ENCODE measurements at regions of chr3 and their contacts with region 1.

Region 1: DNA sequence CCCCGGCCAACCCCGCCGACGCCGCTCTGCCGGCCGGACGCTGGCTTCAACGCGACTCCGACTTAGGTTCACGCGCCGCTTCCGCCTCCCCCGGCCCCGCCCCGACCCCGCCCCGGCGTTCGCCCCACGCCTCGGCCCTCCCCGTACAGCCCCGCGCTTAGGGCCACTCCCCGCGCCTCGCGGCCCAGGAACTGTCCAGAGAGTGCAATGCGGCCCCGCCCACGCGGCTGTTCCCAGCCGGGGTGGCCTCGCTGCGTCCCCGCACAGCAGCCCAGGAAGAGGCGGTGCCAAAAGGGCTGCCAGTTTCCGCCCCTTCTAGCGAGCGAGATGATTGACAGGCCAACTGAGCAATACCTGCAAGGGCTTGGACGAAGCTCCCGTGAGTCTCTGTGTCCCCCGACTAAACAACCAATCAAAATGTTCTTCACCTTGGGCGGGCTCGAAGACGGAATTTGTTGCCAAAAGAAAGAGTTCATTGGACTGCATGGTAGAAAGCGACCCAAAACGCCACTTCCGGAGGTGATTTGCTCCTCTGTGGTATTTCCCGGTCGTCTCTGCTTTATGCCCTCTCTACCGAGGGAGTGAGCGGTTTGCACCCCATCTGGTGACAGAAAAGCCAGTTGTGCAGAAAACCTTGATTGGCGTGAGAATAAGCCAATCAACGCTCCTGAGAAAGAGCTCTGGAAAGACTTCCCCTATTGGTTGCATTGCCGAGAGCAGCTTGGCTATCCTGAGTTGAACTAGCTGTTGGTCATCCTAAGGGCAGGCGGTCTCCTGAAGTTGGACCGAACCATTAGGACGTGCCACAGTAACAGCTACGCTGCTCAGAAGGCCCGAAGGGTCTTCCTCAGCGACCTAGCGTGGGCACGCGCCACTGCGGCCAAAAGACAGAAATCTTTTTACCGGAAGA is at the start of gene UBP1:
- DNase-seq: peak; percentile 99
- H3K4me3 Mint-ChIP-seq: peak within 1 kb of the TSS; percentile 100
- H3K27ac Mint-ChIP-seq: peak within 1 kb of the TSS; percentile 100
- H3K4me1 Mint-ChIP-seq: peaks cover 54% of the 10 kb centered on the region
- H3K27me3 Mint-ChIP-seq: no peaks in the 10 kb centered on the region
- total RNA-seq, gene UBP1: 69.4 and 71.6 TPM in 2 replicates

Region 2: DNA sequence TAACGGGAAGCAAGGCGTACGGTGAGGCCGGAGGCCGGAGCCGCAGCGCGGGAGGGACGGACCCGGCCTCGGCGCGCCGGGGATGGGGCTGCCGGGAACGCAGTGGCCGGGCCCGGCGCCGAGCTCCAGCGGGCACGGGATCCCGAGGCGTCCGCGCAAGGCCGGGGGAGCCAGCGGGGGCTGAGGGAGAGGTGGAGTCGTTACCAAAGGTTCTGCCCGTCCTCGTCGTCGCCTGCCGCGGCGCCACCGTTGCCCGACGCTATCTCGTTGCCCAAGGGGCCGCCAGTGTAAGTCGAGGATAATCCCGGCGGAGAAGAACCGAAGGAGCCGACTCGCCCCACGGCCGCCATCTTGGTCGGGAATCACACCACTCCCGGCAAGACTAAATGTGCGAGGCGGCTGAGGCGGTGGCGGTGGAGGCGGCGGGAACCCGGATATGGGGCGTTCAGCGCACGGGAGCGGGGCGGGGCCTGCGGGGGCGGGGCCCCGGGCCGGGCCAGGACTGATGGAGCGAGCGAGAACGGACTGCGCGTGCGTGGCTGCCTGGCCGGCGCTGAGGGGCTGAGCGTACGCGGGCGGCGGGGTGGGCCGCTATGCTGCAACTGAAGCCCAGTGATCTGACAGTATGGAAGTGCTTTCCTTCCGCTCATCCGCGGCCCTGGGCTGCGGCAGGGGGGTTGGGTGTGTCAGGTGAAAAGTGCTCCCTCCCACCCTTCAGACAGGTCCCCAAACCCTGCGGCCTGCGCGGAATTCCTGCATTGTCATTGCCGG is 870.0 kb before region 1 on chr3 and contains the start of gene DYNC1LI1:
- intact Hi-C with region 1: loop called (anchors 2 kb)
- DNase-seq: peak; percentile 90
- H3K4me3 Mint-ChIP-seq: peak within 1 kb of the TSS; percentile 91
- H3K27ac Mint-ChIP-seq: peak within 1 kb of the TSS; percentile 88
- H3K4me1 Mint-ChIP-seq: peaks cover 22% of the 10 kb centered on the region
- H3K27me3 Mint-ChIP-seq: no peaks in the 10 kb centered on the region
- total RNA-seq, gene DYNC1LI1: 35.9 and 43.3 TPM in 2 replicates

Region 3: GRCh38 chr3:33023172-33024136 is 417.1 kb before region 1 on chr3:
- intact Hi-C with region 1: loop called (anchors 1 kb)
- DNase-seq: no peak
- H3K4me3 Mint-ChIP-seq: peak overlapping the region; percentile 28
- H3K27ac Mint-ChIP-seq: peak overlapping the region; percentile 94
- H3K4me1 Mint-ChIP-seq: peaks cover 56% of the 10 kb centered on the region
- H3K27me3 Mint-ChIP-seq: peaks cover 1% of the 10 kb centered on the region

Region 4: DNA sequence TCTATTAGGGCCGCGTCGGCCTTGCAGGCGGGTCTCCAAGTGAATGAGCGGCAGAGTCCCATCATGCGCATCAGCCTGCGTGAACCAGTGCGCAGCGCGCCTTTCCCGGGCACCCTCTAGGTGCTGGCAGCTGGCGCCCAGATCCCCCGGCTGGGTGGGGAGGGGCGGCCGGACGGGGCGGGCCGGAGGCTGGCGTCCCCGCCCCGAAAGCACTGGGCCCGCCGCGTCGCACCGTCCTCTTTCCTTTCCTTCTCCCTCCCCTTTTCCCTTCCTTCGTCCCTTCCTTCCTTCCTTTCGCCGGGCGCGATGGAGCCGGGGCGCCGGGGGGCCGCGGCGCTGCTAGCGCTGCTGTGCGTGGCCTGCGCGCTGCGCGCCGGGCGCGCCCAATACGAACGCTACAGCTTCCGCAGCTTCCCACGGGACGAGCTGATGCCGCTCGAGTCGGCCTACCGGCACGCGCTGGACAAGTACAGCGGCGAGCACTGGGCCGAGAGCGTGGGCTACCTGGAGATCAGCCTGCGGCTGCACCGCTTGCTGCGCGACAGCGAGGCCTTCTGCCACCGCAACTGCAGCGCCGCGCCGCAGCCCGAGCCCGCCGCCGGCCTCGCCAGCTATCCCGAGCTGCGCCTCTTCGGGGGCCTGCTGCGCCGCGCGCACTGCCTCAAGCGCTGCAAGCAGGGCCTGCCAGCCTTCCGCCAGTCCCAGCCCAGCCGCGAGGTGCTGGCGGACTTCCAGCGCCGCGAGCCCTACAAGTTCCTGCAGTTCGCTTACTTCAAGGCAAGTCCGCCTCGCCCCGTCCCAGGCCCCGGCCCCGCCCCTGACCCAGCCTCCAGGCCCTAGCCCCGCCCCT is 326.6 kb before region 1 on chr3 and contains the start of gene CRTAP:
- intact Hi-C with region 1: loop called (anchors 1 kb)
- DNase-seq: peak; percentile 78
- H3K4me3 Mint-ChIP-seq: peak within 1 kb of the TSS; percentile 87
- H3K27ac Mint-ChIP-seq: peak within 1 kb of the TSS; percentile 74
- H3K4me1 Mint-ChIP-seq: peaks cover 26% of the 10 kb centered on the region
- H3K27me3 Mint-ChIP-seq: no peaks in the 10 kb centered on the region
- total RNA-seq, gene CRTAP: 30.3 and 33.2 TPM in 2 replicates

Region 5: DNA sequence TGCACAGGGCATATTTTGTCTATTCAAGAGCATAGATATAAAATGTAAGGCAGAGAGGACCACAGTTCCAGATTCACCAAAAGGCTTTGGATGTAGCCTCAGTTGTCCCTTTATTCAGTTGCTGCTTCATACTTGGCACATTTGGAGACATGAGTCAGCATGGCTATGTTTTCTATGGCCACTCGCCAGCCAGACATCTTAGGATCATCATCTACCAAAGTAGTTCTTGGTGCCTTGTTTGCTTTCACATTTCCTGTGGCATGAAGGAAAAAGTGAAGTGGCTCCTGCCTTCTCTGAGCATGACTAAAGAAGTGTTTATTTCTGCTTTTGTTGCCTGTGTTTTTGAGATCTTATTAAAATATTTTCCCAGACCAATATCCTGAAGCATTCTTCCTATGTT is 229.1 kb before region 1 on chr3:
- intact Hi-C with region 1: no loop called
- DNase-seq: no peak
- H3K4me3 Mint-ChIP-seq: no peak overlapping the region
- H3K27ac Mint-ChIP-seq: no peak overlapping the region
- H3K4me1 Mint-ChIP-seq: no peaks in the 10 kb centered on the region
- H3K27me3 Mint-ChIP-seq: peaks cover 36% of the 10 kb centered on the region

Region 6: DNA sequence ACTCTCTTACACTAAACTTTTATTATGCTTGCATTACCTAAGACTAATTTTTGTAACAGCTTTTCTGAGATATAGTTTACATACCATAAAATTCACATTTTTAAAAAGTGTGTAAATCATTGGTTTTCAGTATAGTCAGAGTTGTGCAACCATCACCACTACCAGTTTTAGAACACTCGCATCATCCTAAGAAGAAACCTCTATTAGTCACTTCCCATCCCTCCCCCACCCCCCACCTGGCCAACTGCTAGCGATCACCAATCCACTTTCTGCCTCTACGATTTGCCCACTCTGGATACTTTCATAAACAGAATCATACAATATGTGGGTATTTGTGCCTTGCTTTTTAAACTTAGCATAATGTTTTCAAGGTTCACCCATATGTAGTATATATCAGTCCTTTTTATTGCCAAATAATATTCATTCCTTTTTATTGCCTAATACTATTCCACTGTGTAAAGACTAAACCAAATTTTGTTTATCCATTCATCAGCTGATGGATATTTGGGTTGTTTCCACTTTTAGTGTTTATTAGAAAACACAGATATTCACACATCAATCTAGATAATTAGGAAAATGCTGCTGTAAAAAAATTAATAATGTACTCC is 23.4 kb before region 1 on chr3:
- intact Hi-C with region 1: loop called (anchors 2 kb)
- DNase-seq: no peak
- H3K4me3 Mint-ChIP-seq: no peak overlapping the region
- H3K27ac Mint-ChIP-seq: no peak overlapping the region
- H3K4me1 Mint-ChIP-seq: peaks cover 19% of the 10 kb centered on the region
- H3K27me3 Mint-ChIP-seq: no peaks in the 10 kb centered on the region

Region 7: DNA sequence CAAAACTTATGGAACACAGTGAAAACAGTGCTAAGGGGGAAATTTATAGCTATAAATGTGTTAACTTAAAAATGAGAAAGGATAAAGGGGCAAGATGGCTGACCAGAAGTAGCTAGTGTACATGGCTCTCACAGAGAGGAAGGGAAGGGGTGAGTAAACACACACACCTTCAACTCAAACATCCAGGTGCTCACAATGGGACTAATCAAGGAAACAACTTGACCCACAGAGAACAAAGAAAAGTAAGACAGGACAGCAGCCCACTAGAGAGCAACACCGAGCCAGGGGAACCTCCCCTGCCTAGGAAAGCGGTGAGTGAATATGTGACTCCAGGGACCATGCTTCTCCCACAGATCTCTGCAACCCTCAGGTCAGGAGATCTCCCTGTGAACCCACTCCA is 84.7 kb after region 1 on chr3:
- intact Hi-C with region 1: no loop called
- DNase-seq: no peak
- H3K4me3 Mint-ChIP-seq: no peak overlapping the region
- H3K27ac Mint-ChIP-seq: no peak overlapping the region
- H3K4me1 Mint-ChIP-seq: no peaks in the 10 kb centered on the region
- H3K27me3 Mint-ChIP-seq: no peaks in the 10 kb centered on the region

Region 8: DNA sequence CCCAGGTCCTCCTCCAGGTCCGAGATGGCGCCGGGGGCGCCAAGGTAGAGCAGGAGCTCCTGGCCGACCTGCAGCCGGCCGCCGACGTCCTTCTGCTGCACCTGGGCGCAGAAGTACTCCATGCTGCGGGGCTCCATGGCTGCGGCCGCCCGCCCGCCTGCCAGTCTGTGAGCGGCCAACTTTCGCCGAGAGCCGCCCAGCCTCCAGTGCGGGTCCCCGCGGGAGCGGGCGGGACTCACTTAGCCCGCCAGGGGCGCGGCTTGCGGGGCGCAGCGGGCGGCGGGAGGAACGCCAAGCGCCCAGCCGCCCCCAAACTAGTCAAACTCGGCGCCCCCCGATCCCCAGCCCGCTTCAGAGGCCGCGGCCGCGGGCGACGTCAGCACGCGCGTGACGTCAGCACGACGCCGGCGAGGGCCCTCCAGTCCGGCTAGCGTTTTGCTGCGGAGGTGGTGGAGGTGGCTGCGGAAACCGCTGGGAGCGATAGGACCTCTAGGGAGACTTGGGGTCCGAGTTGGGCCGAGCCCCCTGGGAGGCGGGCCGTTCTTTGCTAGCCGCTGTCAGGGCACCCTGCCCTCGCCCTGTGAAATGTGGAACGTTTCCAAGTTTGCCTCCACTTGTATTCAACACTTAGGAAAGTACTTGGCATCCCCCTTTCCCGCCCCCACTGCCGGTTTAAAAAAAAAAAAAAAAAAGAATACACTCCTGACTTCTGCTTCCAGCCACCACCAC is 277.5 kb after region 1 on chr3 and contains the start of gene CLASP2:
- intact Hi-C with region 1: loop called (anchors 1 kb)
- DNase-seq: peak; percentile 79
- H3K4me3 Mint-ChIP-seq: peak within 1 kb of the TSS; percentile 92
- H3K27ac Mint-ChIP-seq: peak within 1 kb of the TSS; percentile 94
- H3K4me1 Mint-ChIP-seq: peaks cover 7% of the 10 kb centered on the region
- H3K27me3 Mint-ChIP-seq: peaks cover 3% of the 10 kb centered on the region
- total RNA-seq, gene CLASP2: 61.9 and 67.0 TPM in 2 replicates

Region 9: GRCh38 chr3:33926998-33927605 is 486.5 kb after region 1 on chr3:
- intact Hi-C with region 1: no loop called
- DNase-seq: no peak
- H3K4me3 Mint-ChIP-seq: no peak overlapping the region
- H3K27ac Mint-ChIP-seq: no peak overlapping the region
- H3K4me1 Mint-ChIP-seq: no peaks in the 10 kb centered on the region
- H3K27me3 Mint-ChIP-seq: peaks cover 3% of the 10 kb centered on the region

Measured in activated T-helper 1 cell treated with anti-CD3 and anti-CD28 coated beads, Interleukin-12 subunit alpha, Interleukin-12 subunit beta, Interleukin-2, Interleukin-4 antibody, amounts not matched to agents 30 ng/mL and 10 ng/mL and 1 ng/mL, durations not matched to agents 14 hours and 24 hours and 36 hours (primary cell).